Activated T-helper 1 cell treated with anti-CD3 and anti-CD28 coated beads, Interleukin-12 subunit alpha, Interleukin-12 subunit beta, Interleukin-2, Interleukin-4 antibody, amounts not matched to agents 30 ng/mL and 10 ng/mL and 1 ng/mL, durations not matched to agents 14 hours and 24 hours and 36 hours (primary cell): ENCODE measurements at regions of chr6 and their contacts with region 1.

Region 1: DNA sequence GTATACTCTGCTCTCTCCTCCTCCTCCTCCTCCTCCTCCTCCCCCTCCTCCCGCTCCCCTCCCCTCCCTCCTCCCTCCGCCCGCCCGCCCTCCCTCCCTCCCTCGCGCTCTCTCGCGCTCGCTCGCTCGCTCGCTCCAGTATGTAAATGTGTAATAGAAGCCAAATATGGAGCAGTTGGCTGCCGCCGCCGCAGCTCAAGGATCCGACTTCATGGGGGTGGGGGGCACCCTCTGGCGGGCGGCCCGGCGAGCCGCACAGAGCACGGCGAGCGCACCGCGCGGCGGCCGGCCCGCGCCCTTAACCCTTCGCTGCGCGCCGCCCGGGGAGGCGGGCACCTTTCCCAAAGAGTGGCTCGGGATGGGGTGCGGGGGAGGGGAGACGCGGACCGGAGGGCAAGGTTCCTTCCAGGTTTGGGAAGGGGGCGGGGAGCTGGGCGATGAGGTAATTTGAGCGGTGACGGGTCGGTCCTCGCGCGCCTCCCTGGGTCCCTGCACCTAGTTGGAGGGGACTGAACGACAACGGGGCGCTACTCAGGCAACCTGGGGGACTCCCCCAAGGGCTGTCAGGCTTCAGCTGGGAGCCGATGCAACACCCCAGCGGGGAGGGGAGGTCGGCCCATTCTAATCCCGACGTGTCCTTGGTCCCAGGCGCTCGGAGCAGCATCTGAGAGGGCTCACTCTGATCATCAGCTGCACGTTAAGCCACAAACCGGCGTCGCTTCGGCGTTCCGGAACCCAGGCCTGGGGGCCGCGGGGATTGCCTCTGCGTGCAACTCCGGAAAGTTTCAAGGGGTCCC is 409 bp upstream of the ATXN1 start:
- DNase-seq: peak; percentile 81
- H3K4me3 Mint-ChIP-seq: peak overlapping the region; percentile 97
- H3K27ac Mint-ChIP-seq: peak overlapping the region; percentile 99
- H3K4me1 Mint-ChIP-seq: peaks cover 77% of the 10 kb centered on the region
- H3K27me3 Mint-ChIP-seq: no peaks in the 10 kb centered on the region

Region 2: GRCh38 chr6:16238057-16238962 is 523.4 kb before region 1 on chr6 and contains the start of gene GMPR:
- intact Hi-C with region 1: loop called (anchors 1 kb)
- DNase-seq: peak; percentile 76
- H3K4me3 Mint-ChIP-seq: peak within 1 kb of the TSS; percentile 84
- H3K27ac Mint-ChIP-seq: peak within 1 kb of the TSS; percentile 64
- H3K4me1 Mint-ChIP-seq: peaks cover 26% of the 10 kb centered on the region
- H3K27me3 Mint-ChIP-seq: peaks cover 41% of the 10 kb centered on the region
- total RNA-seq, gene GMPR: 0.96 and 1.2 TPM in 2 replicates

Region 3: DNA sequence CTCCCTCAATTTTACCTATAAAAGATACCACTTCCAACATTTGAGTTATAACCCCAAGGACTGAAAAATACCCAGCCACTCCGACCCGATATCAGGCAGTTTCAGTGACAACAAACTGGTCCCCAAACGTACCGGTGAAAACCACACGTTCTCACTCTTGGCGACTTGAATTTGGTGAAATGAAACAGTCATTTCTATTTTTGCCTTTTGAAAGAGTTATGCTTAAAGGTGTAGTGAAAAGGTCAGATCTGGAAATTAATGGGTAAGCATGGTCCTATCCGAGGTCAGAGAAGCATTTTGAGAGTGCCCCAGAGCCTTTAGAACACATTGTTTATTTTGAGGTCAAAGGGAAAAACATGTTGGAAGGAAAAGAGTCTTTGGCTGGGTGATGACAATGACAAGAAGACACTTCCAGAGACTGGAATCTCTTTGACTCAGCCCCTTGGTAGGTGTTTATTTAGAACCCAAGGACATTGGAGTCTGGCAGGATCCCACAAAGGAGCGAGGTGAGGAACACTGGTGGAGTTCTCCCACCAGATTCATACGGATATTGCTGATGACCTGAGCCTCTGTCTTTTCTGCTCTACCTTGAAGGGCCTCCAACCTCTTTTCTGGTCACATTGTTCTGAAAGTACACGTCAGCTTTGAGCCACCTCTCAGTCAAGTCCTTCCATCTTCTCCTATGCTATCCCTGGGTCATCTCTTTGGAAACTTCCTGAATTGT is 288.3 kb before region 1 on chr6:
- intact Hi-C with region 1: loop called (anchors 2 kb)
- DNase-seq: peak; percentile 14
- H3K4me3 Mint-ChIP-seq: peak overlapping the region; percentile 66
- H3K27ac Mint-ChIP-seq: peak overlapping the region; percentile 93
- H3K4me1 Mint-ChIP-seq: peaks cover 82% of the 10 kb centered on the region
- H3K27me3 Mint-ChIP-seq: no peaks in the 10 kb centered on the region

Region 4: GRCh38 chr6:16591396-16592222 is 170.1 kb before region 1 on chr6:
- intact Hi-C with region 1: loop called (anchors 1 kb)
- DNase-seq: no peak
- H3K4me3 Mint-ChIP-seq: no peak overlapping the region
- H3K27ac Mint-ChIP-seq: peak overlapping the region; percentile 87
- H3K4me1 Mint-ChIP-seq: peaks cover 38% of the 10 kb centered on the region
- H3K27me3 Mint-ChIP-seq: no peaks in the 10 kb centered on the region

Region 5: GRCh38 chr6:16684896-16685554 is 76.6 kb before region 1 on chr6:
- intact Hi-C with region 1: loop called (anchors 1 kb)
- DNase-seq: peak; percentile 71
- H3K4me3 Mint-ChIP-seq: peak overlapping the region; percentile 43
- H3K27ac Mint-ChIP-seq: peak overlapping the region; percentile 88
- H3K4me1 Mint-ChIP-seq: peaks cover 97% of the 10 kb centered on the region
- H3K27me3 Mint-ChIP-seq: no peaks in the 10 kb centered on the region

Region 6: DNA sequence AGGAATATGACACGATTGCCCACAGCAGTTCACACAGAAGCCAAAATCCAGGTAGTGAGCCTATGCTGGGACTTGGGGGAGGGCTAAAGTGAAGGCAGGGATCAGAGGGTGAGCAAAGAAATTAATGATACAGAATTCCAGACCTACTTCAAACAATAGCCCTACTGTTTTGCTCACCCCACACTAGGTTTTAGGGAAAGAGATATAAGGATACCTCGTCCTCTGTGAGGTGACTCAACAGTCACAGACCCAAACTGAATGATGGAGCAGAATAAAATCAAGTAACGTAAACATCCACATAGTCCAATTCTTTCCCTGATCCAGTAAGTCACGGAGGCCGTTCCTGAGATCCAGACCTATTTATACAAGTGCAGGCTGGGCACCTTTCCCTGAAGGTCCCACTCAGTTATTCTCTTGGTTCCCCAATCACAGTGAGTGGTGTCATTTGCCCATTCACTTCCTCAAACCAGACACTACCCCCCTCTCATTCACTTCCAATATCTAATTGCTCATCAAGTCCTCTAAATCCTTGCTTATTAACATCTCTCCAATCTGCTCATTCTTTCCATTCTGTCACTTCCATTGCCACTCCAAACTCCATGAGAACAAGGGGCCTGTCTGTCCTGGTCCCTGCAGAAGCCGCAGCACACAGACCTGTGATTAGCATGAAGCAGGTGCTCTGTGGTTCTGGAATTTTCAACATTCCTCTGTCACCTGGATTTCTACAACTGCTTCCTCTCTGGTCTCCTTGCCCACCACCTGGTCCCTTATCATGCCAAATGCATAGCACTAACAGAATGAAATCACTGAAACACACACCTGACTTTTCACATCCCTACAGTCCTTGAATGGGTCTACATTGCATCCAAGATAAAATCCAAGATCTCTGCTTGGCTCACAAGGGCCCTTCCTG is 56.3 kb before region 1 on chr6:
- intact Hi-C with region 1: no loop called
- DNase-seq: no peak
- H3K4me3 Mint-ChIP-seq: peak overlapping the region; percentile 83
- H3K27ac Mint-ChIP-seq: peak overlapping the region; percentile 89
- H3K4me1 Mint-ChIP-seq: peaks cover 55% of the 10 kb centered on the region
- H3K27me3 Mint-ChIP-seq: no peaks in the 10 kb centered on the region

Region 7: GRCh38 chr6:16731478-16732051 is 30.1 kb before region 1 on chr6:
- intact Hi-C with region 1: loop called (anchors 1 kb)
- DNase-seq: peak; percentile 36
- H3K4me3 Mint-ChIP-seq: peak overlapping the region; percentile 51
- H3K27ac Mint-ChIP-seq: peak overlapping the region; percentile 89
- H3K4me1 Mint-ChIP-seq: peaks cover 71% of the 10 kb centered on the region
- H3K27me3 Mint-ChIP-seq: no peaks in the 10 kb centered on the region

Region 8: DNA sequence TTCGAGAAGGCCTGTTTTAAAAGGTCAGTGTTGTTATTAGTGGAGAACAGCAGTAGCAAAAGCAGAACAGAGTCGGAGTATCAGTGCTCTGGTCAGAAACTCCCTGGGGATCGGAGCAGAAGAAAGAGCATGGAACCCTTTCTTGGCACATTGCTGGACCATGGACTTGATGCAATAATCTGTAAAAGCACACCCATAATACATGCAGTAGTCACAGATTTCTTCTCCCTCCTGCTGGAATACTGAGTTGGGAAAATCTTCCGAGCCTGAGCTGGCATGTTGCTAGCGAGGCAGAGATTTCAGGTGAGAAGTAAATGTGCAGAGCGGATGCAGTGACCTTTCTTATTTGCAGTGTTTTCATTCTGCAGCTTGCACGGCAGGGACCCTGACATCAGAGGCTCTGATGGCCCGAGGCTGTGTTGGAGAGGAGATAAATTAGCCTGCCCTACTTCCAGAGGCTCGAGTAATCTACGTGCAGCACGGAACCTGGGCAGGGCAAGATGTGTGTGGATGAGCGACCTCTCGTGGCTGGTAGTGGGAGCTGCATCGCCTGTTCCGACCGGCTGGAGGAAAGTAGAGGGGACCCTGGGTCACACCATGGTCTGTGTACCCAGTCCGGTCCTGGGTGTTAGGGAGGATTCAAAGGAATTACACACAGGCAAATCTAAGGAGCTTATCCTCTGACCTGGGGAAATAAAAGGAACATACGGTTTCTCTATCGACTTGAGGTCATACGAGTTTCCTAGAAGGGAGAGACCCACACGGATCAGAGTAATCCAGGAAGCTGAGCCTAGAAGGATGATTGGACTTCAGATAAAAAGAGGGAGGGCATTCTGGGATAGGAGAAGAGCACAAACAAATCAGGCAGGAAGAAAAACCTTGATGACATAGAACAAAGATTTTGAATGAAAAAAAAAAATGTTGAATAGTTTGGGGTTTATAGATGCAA is 203.2 kb after region 1 on chr6:
- intact Hi-C with region 1: loop called (anchors 1 kb)
- DNase-seq: peak; percentile 42
- H3K4me3 Mint-ChIP-seq: no peak overlapping the region
- H3K27ac Mint-ChIP-seq: no peak overlapping the region
- H3K4me1 Mint-ChIP-seq: peaks cover 20% of the 10 kb centered on the region
- H3K27me3 Mint-ChIP-seq: peaks cover 11% of the 10 kb centered on the region